Activated B cell treated with CpG ODN at 0.5 μM for 24 hours (primary cell): ENCODE measurements at regions of chr6 and their contacts with region 1.

Region 1: DNA sequence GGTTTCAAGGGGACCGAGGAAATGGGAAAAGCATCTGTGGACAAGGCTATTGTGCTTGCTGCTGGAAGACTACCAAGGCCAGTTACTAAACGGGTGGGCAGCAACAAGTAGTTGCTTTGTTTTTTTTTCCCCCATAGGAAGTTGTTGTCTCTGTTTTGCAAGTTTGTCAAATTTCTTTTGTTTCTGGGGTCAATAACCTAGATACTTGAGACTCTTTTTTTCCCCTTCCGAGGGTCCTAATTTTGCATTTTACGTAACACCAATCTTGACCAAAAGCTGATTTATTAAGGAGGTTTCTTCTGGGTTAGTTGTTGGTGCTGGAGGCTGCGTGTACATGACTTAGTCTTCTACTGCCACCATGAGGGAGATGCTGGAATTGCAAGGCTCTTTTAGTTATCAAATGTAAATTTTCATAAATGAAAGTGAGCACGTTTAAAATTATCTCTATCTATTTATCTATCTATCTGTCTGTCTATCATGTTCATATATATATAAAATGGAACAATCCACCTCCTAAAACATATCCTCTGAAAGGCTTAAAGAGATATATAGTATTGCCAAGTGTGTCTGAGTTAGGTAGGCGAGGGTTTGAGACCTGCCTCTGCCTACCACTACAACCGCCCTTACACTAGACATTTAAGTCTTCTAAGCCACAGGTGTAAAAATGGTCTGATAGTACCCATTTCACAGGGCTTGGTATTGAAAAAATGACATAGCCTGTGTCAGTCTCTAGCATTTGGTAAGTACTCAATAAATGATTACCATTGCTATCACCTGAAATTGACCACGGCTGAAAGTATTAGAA is 60.2 kb downstream of the GCLC start:
- DNase-seq: no peak
- ATAC-seq: peak; percentile 66
- H3K4me3 Mint-ChIP-seq: peak overlapping the region; percentile 1
- H3K27ac Mint-ChIP-seq: peak overlapping the region; percentile 79
- H3K4me1 Mint-ChIP-seq: peaks cover 62% of the 10 kb centered on the region
- H3K27me3 Mint-ChIP-seq: peaks cover 3% of the 10 kb centered on the region
- CTCF ChIP-seq: peak; percentile 82

Region 2: GRCh38 chr6:52724406-52725121 is 760.1 kb before region 1 on chr6:
- CTCF ChIA-PET with region 1: no interaction called
- POLR2A ChIA-PET with region 1: no interaction called
- intact Hi-C with region 1: loop called (anchors 1 kb)
- DNase-seq: peak; percentile 26
- ATAC-seq: peak; percentile 97
- H3K4me3 Mint-ChIP-seq: no peak overlapping the region
- H3K27ac Mint-ChIP-seq: no peak overlapping the region
- H3K4me1 Mint-ChIP-seq: peaks cover 7% of the 10 kb centered on the region
- H3K27me3 Mint-ChIP-seq: no peaks in the 10 kb centered on the region
- CTCF ChIP-seq: no peak

Region 3: GRCh38 chr6:52995913-52996645 is 488.6 kb before region 1 on chr6:
- CTCF ChIA-PET with region 1: no interaction called
- POLR2A ChIA-PET with region 1: no interaction called
- intact Hi-C with region 1: loop called (anchors 1 kb)
- DNase-seq: peak; percentile 27
- ATAC-seq: no peak
- H3K4me3 Mint-ChIP-seq: peak overlapping the region; percentile 94
- H3K27ac Mint-ChIP-seq: peak overlapping the region; percentile 99
- H3K4me1 Mint-ChIP-seq: peaks cover 27% of the 10 kb centered on the region
- H3K27me3 Mint-ChIP-seq: peaks cover 5% of the 10 kb centered on the region
- CTCF ChIP-seq: no peak

Region 4: DNA sequence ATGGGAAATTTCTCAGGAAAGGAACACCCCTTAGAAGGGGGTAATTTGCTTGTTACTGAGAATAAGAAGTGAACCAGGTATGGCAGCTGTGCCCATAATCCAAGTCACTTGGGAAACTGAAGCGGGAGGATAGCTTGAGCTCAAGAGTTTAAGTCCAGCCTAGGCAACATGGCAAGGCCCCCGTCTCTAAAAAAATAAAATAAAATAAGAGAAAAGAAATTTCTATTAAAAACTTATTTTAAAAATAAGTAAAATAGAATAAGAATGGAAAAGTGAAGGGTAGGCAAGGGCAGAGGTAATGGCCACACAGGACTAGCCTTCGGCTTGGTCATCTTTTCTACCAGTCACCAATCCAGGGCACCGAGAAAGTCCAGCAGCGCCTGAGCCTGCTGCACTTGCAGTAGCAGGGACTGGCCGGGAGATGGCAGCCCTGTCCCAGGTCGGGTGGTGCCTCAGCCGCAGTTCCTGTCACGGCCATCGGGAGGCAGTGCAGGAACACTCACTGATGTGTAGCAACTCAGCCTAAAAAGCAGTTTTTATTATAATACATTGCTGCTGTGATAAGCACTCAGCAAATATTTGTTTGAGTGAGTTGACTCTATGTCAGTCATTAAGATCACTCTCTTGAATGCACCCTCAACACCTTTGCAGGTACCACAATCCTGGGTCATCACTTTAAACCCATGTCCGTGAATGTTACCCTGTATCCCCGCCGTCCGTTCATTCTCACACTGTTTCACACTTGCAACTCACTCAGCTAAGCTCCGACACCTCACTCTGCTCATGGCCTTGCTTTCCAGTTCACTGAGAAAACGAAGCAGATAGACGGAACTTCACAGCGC is 312.9 kb before region 1 on chr6:
- CTCF ChIA-PET with region 1: interaction called, 109 read pairs
- POLR2A ChIA-PET with region 1: interaction called, 4 read pairs
- intact Hi-C with region 1: loop called (anchors 1 kb)
- DNase-seq: peak; percentile 91
- ATAC-seq: peak; percentile 98
- H3K4me3 Mint-ChIP-seq: peak overlapping the region; percentile 68
- H3K27ac Mint-ChIP-seq: peak overlapping the region; percentile 87
- H3K4me1 Mint-ChIP-seq: peaks cover 24% of the 10 kb centered on the region
- H3K27me3 Mint-ChIP-seq: no peaks in the 10 kb centered on the region
- CTCF ChIP-seq: peak; percentile 100

Region 5: GRCh38 chr6:53294095-53294494 is 190.6 kb before region 1 on chr6:
- CTCF ChIA-PET with region 1: interaction called, 14 read pairs
- POLR2A ChIA-PET with region 1: no interaction called
- intact Hi-C with region 1: loop called (anchors 1 kb)
- DNase-seq: no peak
- ATAC-seq: peak; percentile 62
- H3K4me3 Mint-ChIP-seq: no peak overlapping the region
- H3K27ac Mint-ChIP-seq: peak overlapping the region; percentile 80
- H3K4me1 Mint-ChIP-seq: peaks cover 89% of the 10 kb centered on the region
- H3K27me3 Mint-ChIP-seq: no peaks in the 10 kb centered on the region
- CTCF ChIP-seq: peak; percentile 26

Region 6: DNA sequence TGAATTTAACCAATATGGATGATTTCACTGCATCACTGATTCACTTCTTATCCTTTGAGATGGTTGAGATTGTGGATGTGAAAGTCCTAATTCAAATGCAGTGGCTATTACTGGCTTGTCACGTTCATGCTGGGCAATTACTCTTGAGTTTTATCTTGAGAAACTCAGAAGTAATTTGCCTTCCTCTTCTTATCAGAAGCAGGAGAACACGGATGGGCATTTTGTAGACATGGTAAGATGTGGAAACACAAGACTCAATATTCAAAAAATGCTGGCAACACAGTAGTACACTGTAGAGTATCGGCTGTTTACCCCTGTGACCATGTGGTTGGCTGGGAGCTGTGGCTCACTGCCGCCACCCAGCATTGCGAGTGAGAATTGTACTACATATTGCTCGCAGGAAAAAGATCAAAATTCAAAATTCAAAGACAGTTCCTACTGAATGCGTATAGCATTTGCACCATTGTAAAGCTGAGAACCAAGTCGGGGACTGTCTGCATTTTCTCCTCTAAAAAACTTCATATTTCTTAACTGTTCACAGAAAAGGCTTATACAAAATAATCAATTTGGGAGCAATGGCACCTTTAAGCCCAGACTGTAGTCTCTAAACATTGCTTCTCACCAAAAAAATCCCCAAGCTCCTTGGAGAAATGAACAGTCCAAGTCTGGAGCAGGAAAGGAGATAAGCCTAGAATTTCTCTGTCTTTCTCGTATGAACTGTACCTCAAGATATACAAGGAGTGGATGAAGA is 74.0 kb before region 1 on chr6:
- CTCF ChIA-PET with region 1: interaction called, 23 read pairs
- POLR2A ChIA-PET with region 1: interaction called, 3 read pairs
- intact Hi-C with region 1: loop called (anchors 1 kb)
- DNase-seq: peak; percentile 20
- ATAC-seq: peak; percentile 98
- H3K4me3 Mint-ChIP-seq: peak overlapping the region; percentile 70
- H3K27ac Mint-ChIP-seq: peak overlapping the region; percentile 82
- H3K4me1 Mint-ChIP-seq: peaks cover 9% of the 10 kb centered on the region
- H3K27me3 Mint-ChIP-seq: no peaks in the 10 kb centered on the region
- CTCF ChIP-seq: no peak

Region 7: DNA sequence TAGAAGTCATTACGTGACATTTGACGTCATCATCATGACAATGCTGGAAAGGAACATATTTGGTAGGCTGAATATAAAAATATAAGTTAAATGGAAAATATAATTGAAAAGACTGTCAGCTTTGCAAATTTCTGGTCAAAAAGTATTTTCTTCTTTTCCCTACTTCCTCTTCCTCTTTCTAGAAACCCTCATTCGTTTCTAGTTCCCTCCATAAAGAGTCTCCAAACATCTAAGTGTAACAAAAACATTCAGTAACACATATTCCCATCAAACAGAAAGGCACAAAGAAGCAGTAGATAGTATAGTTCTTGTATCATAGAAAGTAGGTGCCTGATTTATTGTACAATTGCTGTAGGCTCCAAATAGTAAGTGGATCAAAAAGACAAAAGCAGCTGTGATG is 1211.1 kb after region 1 on chr6:
- CTCF ChIA-PET with region 1: no interaction called
- POLR2A ChIA-PET with region 1: no interaction called
- intact Hi-C with region 1: no loop called
- DNase-seq: no peak
- ATAC-seq: no peak
- H3K4me3 Mint-ChIP-seq: no peak overlapping the region
- H3K27ac Mint-ChIP-seq: no peak overlapping the region
- H3K4me1 Mint-ChIP-seq: peaks cover 4% of the 10 kb centered on the region
- H3K27me3 Mint-ChIP-seq: no peaks in the 10 kb centered on the region
- CTCF ChIP-seq: no peak